GM12878 (cell line): ENCODE measurements at regions of chr12 and their contacts with region 1.

Region 1: DNA sequence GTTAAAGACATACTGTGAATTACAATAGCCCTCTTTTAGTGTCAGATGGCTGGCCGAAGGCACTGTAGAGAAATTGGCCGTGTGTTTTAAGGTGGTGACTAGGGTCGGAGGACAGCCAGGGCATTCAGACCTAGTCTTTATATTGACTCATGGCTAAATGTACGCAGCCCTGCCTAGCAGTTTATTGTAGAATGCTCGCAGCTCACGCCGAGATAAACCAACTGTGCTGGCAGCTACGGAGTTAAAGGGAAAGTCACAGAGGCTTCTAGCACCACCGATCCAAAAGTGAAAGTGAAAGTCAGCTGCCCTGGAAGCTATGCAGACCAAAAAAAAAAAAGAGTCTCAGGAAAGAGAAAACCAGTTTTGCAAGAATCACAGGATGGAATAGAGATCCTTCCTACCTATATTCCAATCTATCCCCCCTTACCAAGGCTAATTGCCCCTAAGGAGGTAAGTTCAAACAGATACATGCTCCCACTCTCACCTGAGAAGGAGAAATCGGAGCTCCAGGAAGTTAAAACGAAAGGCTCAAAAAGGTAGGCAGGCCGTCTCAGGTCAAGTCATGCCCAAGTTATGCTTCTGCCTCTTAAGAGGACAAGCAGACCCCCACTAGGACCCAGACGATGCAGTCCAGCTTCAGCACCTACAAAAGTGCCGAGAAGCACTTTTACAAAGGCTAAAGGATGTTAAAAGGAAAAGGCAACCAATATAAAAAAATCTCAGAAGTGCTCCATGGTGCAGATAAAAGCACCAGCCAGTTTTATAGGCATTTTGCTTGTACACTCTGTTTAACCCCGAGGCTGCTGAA is 24.8 kb downstream of the KLRK1 start:
- DNase-seq: peak; percentile 53
- ATAC-seq: peak; percentile 71
- H3K4me3 ChIP-seq: peak overlapping the region; percentile 72
- H3K27ac ChIP-seq: peak overlapping the region; percentile 72
- H3K4me1 ChIP-seq: peaks cover 21% of the 10 kb centered on the region
- H3K27me3 ChIP-seq: no peaks in the 10 kb centered on the region
- CTCF ChIP-seq: no peak
- EP300 ChIP-seq: no peak
- POLR2A ChIP-seq: no peak
- RAD21 ChIP-seq: no peak

Region 2: GRCh38 chr12:10385166-10385613 is 20.2 kb after region 1 on chr12:
- CTCF ChIA-PET with region 1: interaction called, 13 read pairs
- POLR2A ChIA-PET with region 1: interaction called, 3 read pairs
- RAD21 ChIA-PET with region 1: interaction called, 75 read pairs
- SMC1A ChIA-PET with region 1: interaction called, 67 read pairs
- in situ Hi-C with region 1: no loop called
- intact Hi-C with region 1: no loop called
- DNase-seq: no peak
- ATAC-seq: no peak
- H3K4me3 ChIP-seq: no peak overlapping the region
- H3K27ac ChIP-seq: no peak overlapping the region
- H3K4me1 ChIP-seq: no peaks in the 10 kb centered on the region
- H3K27me3 ChIP-seq: no peaks in the 10 kb centered on the region
- CTCF ChIP-seq: no peak
- EP300 ChIP-seq: no peak
- POLR2A ChIP-seq: no peak
- RAD21 ChIP-seq: no peak

Region 3: GRCh38 chr12:10395390-10395998 is 30.5 kb after region 1 on chr12:
- CTCF ChIA-PET with region 1: interaction called, 10 read pairs
- POLR2A ChIA-PET with region 1: interaction called, 24 read pairs
- RAD21 ChIA-PET with region 1: interaction called, 75 read pairs
- SMC1A ChIA-PET with region 1: interaction called, 67 read pairs
- in situ Hi-C with region 1: no loop called
- intact Hi-C with region 1: loop called (anchors 1 kb)
- DNase-seq: peak; percentile 60
- ATAC-seq: peak; percentile 83
- H3K4me3 ChIP-seq: no peak overlapping the region
- H3K27ac ChIP-seq: peak overlapping the region; percentile 53; the same call in 1 of the 2 replicates
- H3K4me1 ChIP-seq: peaks cover 9% of the 10 kb centered on the region; the same call in 1 of the 2 replicates
- H3K27me3 ChIP-seq: no peaks in the 10 kb centered on the region
- CTCF ChIP-seq: no peak
- EP300 ChIP-seq: peak; percentile 91 to 95
- POLR2A ChIP-seq: no peak
- RAD21 ChIP-seq: no peak

Region 4: GRCh38 chr12:10409387-10409786 is 44.4 kb after region 1 on chr12 and contains the start of gene KLRC4:
- CTCF ChIA-PET with region 1: interaction called, 11 read pairs
- POLR2A ChIA-PET with region 1: interaction called, 4 read pairs
- RAD21 ChIA-PET with region 1: interaction called, 31 read pairs
- SMC1A ChIA-PET with region 1: interaction called, 21 read pairs
- in situ Hi-C with region 1: no loop called
- intact Hi-C with region 1: no loop called
- DNase-seq: no peak
- ATAC-seq: peak; percentile 51
- H3K4me3 ChIP-seq: no peak within 1 kb of the TSS
- H3K27ac ChIP-seq: no peak within 1 kb of the TSS
- H3K4me1 ChIP-seq: no peaks in the 10 kb centered on the region; the same call in 1 of the 2 replicates
- H3K27me3 ChIP-seq: no peaks in the 10 kb centered on the region
- CTCF ChIP-seq: no peak
- EP300 ChIP-seq: no peak
- POLR2A ChIP-seq: no peak
- RAD21 ChIP-seq: no peak
- polyA plus RNA-seq, gene KLRC4: 0.34 TPM in 1 of 2 experiments, not detected in the other

Region 5: GRCh38 chr12:10562306-10562933 is 197.4 kb after region 1 on chr12:
- CTCF ChIA-PET with region 1: interaction called, 35 read pairs
- POLR2A ChIA-PET with region 1: no interaction called
- RAD21 ChIA-PET with region 1: interaction called, 23 read pairs
- SMC1A ChIA-PET with region 1: interaction called, 51 read pairs
- in situ Hi-C with region 1: no loop called
- intact Hi-C with region 1: loop called (anchors 1 kb)
- DNase-seq: no peak
- ATAC-seq: peak; percentile 39; the same call in 2 of the 3 replicates
- H3K4me3 ChIP-seq: no peak overlapping the region
- H3K27ac ChIP-seq: no peak overlapping the region
- H3K4me1 ChIP-seq: peaks cover 4% of the 10 kb centered on the region
- H3K27me3 ChIP-seq: no peaks in the 10 kb centered on the region
- CTCF ChIP-seq: peak; percentile 45 to 69 (median 56); a peak in 5 of 6 replicates
- EP300 ChIP-seq: no peak
- POLR2A ChIP-seq: no peak
- RAD21 ChIP-seq: peak; percentile 96